Psoas muscle (tissue), 8 donors: ENCODE measurements at regions of chr15 and their contacts with region 1.

Region 1: DNA sequence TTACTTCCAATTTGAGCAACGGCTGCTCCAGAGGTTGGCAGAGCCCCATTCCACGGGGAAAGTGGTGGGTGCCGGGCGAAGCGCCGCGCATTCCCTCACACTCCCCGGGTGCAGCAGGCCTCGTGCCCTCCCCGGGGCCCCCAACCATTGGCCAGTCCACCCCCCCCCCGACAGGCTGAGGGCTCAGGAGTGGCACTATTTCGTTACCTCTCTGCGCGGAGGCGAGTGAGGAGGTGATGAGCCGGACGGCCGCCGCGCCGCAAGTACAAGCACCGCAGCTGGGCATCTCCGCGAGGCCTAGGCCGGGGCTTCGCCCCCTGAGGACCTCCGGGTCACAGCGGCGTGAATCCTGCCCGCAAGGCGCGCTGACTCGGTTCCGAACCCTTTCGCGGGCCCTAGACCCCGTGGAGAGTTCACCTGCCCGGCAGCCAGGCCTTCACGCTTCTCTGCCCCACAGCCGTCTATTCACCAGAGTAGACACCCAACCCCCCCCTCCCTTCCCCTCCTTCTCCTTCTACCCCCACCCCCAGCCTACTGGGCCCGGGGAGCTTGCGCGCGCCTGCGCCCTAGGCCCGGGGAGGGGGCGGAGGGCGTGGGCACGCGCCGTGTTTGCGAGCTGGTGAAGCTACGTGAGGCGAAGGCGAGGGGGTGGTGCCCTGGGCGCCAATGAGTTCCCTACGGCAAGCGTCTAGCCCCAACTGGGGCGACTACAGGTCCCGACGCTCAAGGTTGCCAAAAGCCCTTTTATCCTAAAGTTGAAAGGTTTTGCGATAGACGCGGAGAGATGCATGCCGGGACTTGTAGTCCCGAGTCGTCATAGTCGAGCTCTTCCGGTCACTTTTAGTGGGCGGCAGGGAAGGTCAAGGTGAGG is at the start of gene CLPX:
- DNase-seq: peak; percentile 92 to 97
- ATAC-seq: peak; percentile 93 to 97 (median 96)
- H3K4me3 ChIP-seq: peak within 1 kb of the TSS; percentile 92
- H3K27ac ChIP-seq: peak within 1 kb of the TSS; percentile 97
- H3K4me1 ChIP-seq: peaks cover 20% of the 10 kb centered on the region
- H3K27me3 ChIP-seq: no peaks in the 10 kb centered on the region
- CTCF ChIP-seq: no peak
- total RNA-seq, gene CLPX: 53.7 to 87.2 (median 73.8) TPM

Region 2: GRCh38 chr15:65028921-65029735 is 156.0 kb before region 1 on chr15 and contains the start of gene MTFMT:
- intact Hi-C with region 1: loop called in 1 of 2 experiments (anchors 10 kb)
- DNase-seq: peak; percentile 93 to 96
- ATAC-seq: peak; percentile 94 to 98 (median 96)
- H3K4me3 ChIP-seq: peak within 1 kb of the TSS; percentile 95
- H3K27ac ChIP-seq: peak within 1 kb of the TSS; percentile 78
- H3K4me1 ChIP-seq: peaks cover 14% of the 10 kb centered on the region
- H3K27me3 ChIP-seq: no peaks in the 10 kb centered on the region
- CTCF ChIP-seq: peak; percentile 5
- total RNA-seq, gene MTFMT: 9.5 to 18.1 (median 14.8) TPM

Region 3: DNA sequence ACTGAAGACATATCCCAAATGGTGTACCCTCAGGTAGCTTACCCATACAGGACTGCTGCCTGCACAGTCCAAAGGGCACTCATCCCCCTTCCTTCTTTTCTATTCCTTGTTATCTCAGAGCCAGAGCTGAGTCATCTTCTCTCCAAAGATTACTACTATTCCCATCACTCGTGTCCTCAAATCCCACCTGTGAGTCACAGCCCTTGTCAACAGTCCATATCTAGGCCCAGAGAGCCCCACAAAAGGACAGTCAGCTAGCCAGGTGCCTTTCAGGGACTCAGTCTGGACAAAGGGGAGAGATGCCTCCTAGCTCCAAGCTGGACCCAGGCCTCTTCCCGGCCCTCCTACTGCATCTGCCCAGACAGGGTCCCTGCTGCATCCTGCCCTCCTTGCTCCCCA is 90.6 kb after region 1 on chr15:
- intact Hi-C with region 1: loop called (anchors 2 kb)
- DNase-seq: no peak
- ATAC-seq: peak; percentile 59 to 81 (median 72)
- H3K4me3 ChIP-seq: no peak overlapping the region
- H3K27ac ChIP-seq: peak overlapping the region; percentile 32
- H3K4me1 ChIP-seq: peaks cover 12% of the 10 kb centered on the region
- H3K27me3 ChIP-seq: no peaks in the 10 kb centered on the region
- CTCF ChIP-seq: no peak

Region 4: GRCh38 chr15:65304389-65305144 is 119.5 kb after region 1 on chr15 and contains the start of gene RNU5B-1:
- intact Hi-C with region 1: loop called in 1 of 2 experiments (anchors 5 kb)
- DNase-seq: peak; percentile 68 to 80
- ATAC-seq: peak; percentile 89 to 93 (median 90)
- H3K4me3 ChIP-seq: peak within 1 kb of the TSS; percentile 72
- H3K27ac ChIP-seq: peak within 1 kb of the TSS; percentile 88
- H3K4me1 ChIP-seq: peaks cover 14% of the 10 kb centered on the region
- H3K27me3 ChIP-seq: no peaks in the 10 kb centered on the region
- CTCF ChIP-seq: peak; percentile 84
- total RNA-seq, gene RNU5B-1: 12.8 to 34.0 (median 13.9) TPM in 3 of 4 donors, not detected in the other